ENCODE measurements at regions of chr6 and their contacts with region 1.

Region 1: GRCh38 chr6:11009353-11009752 is 34.8 kb downstream of the ELOVL2 start:
- DNase-seq: no peak

Region 2: GRCh38 chr6:9634776-9635175 is 1374.6 kb before region 1 on chr6:
- intact Hi-C with region 1: no loop called
- DNase-seq: no peak

Region 3: DNA sequence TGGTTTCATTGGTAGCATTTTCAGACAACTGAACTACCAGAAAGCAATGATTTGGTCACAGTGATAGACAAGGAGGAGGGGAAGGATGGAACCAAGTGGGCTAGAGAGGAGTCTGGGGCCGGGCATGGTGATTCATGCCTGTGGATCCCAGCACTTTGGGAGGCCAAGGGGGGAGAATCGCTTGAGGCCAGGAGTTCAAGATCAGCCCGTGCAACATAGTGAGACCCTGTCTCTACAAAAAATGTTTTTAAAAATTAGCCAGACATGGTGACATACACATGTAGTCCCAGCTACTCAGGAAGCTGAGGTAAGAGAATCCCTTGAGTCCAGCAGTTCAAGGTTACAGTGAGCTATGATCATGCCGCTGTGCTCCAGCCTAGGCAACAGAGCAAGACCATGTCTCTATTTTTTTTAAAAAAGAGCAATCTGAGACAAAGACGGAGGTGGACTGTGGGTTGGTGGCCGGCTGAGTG is 51.9 kb before region 1 on chr6:
- intact Hi-C with region 1: loop called in 1 of 2 experiments (anchors 2 kb)
- DNase-seq: no peak